ENCODE measurements at regions of chr2 and their contacts with region 1.

Region 1: DNA sequence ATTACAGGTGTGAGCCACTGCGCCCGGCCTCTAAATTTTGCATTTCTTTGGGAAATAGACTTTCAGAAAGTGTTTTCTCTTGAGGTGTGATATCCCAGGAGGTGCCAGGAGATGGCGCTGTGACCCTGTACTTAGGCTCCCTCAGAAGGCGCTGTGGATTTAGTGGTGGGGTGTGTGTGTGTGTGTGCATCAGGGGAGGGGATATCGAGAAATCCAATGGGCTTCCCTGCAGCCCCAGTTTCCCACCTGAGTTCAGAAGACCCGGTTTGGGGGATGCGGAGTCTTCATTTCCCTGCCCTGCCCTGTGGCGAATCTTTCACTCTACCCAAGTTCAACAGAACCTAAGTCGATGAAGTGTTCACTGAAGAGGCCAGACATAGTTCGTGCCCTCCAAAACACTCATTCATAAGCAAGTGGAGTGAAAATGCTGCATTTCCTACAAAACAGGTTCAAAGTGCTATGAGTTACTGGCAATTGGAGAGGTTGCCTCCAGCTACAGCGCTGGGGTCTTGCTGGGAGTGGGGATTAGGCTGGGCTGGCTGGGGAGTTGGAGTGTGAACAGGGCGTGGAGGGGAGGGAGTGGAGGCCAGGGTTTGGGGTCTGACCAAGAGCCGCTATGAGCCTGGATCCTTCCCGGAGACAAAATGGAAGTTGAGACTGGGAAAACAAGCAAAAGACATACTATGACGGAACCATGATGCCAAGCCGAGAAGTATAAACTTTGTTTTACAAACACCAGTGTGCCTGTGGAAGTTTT is 6.5 kb upstream of the WNT6 start:
- DNase-seq: peak; percentile 52 to 80 (median 65)
- ATAC-seq: peak; percentile 37 to 53
- H3K4me3 ChIP-seq: no peak overlapping the region
- H3K27ac ChIP-seq: no peak overlapping the region
- H3K4me1 ChIP-seq: no peaks in the 10 kb centered on the region
- H3K27me3 ChIP-seq: no peaks in the 10 kb centered on the region

Region 2: GRCh38 chr2:218710687-218711549 is 142.2 kb before region 1 on chr2 and contains the start of gene TTLL4:
- intact Hi-C with region 1: loop called in 2 of 4 experiments (anchors 10 kb)
- DNase-seq: peak; percentile 99
- ATAC-seq: peak; percentile 99
- H3K4me3 ChIP-seq: peak within 1 kb of the TSS; percentile 76
- H3K27ac ChIP-seq: peak within 1 kb of the TSS; percentile 77
- H3K4me1 ChIP-seq: no peaks in the 10 kb centered on the region
- H3K27me3 ChIP-seq: no peaks in the 10 kb centered on the region
- total RNA-seq, gene TTLL4: 5.7 to 15.8 (median 8.3) TPM

Region 3: GRCh38 chr2:218733171-218734021 is 119.7 kb before region 1 on chr2:
- intact Hi-C with region 1: loop called in 1 of 4 experiments (anchors 10 kb)
- DNase-seq: peak in 1 of 3 donors; percentile 58
- ATAC-seq: peak; percentile 59 to 79
- H3K4me3 ChIP-seq: no peak overlapping the region
- H3K27ac ChIP-seq: no peak overlapping the region
- H3K4me1 ChIP-seq: peaks cover 6% of the 10 kb centered on the region
- H3K27me3 ChIP-seq: no peaks in the 10 kb centered on the region

Region 4: GRCh38 chr2:218761795-218762194 is 91.3 kb before region 1 on chr2:
- intact Hi-C with region 1: no loop called
- DNase-seq: no peak
- ATAC-seq: no peak
- H3K4me3 ChIP-seq: no peak overlapping the region
- H3K27ac ChIP-seq: no peak overlapping the region
- H3K4me1 ChIP-seq: no peaks in the 10 kb centered on the region
- H3K27me3 ChIP-seq: no peaks in the 10 kb centered on the region

Region 5: DNA sequence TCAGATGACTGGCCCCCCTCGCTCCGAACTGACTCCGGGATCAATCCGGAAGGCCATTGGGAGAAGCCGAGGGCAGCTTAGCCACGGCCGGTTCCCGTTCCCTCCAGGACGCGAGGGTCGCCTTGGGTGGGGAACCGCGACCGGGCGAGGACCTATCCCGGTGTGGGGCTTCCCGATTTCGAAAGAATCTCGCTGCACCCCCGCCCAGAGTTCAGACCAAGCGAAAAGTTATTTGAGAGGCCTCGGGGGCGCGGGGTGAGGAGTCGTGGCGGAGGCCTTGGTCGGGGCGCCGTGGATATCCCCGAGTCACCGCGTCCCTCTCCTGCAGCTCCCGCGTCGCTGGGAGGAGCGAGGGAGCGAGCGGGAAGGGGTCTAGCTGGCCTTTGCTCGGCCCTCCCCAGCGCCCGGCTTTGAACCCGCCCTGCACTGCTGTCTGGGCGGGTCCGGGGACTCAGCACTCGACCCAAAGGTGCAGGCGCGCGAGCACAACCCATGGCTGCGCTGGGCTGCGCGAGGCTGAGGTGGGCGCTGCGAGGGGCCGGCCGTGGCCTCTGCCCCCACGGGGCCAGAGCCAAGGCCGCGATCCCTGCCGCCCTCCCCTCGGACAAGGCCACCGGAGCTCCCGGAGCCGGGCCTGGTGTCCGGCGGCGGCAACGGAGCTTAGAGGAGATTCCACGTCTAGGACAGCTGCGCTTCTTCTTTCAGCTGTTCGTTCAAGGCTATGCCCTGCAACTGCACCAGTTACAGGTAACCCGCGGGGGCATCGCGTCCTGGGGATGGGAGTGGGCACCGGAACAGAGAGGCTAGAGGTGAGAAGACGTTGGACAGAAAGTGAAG is 71.2 kb before region 1 on chr2 and contains the start of gene CYP27A1:
- intact Hi-C with region 1: no loop called
- DNase-seq: peak; percentile 67 to 88 (median 81)
- ATAC-seq: peak; percentile 93 to 94
- H3K4me3 ChIP-seq: peak within 1 kb of the TSS; percentile 46
- H3K27ac ChIP-seq: peak within 1 kb of the TSS; percentile 49
- H3K4me1 ChIP-seq: no peaks in the 10 kb centered on the region
- H3K27me3 ChIP-seq: no peaks in the 10 kb centered on the region
- total RNA-seq, gene CYP27A1: 15.0 to 20.2 (median 16.3) TPM

Measured in right cardiac atrium (tissue), 5 donors.